ENCODE measurements at regions of chr15 and their contacts with region 1.

Region 1: DNA sequence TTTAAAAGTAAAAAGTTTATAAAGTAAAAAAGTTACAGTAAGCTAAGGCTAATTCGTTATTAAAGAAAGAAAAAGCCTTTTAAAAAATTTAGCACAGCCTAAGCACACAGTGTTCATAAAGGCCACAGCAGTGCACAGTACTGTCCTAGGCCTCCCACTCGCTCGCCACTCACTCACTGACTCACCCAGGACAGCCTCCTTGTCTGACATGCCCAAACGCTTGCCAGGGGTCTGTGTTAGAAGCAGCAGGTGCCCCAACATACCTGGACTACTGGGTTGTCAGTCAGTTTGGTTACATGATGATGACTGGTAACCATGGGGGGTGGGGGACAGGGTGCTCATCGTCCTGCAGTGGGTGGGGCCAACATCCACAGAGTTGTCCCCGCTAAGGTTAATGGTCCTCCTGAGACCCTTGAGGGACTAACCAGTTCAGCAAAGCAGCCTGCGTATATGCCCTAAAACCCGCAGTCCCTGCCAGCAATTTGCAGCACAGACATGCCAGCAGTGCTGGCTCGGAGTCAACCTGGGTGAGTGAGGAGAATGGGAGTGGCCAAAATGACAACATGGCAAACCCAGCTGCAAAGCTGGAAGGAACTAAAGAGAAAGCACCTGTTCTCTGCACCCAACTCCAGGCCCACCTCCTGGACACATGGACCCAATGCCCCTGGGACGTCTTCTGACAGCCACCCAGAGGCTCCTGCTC is 49.2 kb downstream of the CYFIP1 start:
- DNase-seq: no peak
- ATAC-seq: peak; percentile 79

Region 2: DNA sequence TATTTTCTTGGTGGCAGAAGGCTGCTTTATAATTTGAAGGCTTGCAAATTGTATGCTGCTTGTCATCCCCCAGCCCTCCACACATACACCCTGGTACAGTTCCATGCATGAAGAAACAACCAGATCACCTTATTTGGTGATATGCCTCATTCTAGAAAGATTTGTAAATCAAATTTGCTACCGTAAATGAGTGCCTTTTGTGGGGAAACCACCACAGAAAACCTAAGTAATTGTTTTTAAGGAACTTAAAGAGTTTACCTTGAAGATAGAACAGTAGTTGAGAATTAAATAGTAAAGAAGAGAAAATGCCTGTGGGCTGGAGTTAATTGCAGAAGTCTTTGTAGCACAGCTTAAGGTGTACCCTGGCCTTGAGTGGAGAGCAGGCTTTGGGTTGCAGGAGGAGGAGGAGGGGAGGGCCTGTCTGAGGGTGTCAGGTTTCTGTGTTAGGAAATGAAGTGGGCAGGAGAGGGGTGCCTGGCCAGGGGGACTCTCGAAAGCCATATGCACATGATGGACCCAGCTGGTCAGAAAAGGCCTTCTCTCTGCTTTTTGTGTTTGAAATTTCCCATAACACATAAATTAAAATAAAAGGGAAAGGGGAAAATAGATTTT is 85.5 kb before region 1 on chr15:
- intact Hi-C with region 1: no loop called
- DNase-seq: no peak
- ATAC-seq: no peak

Region 3: DNA sequence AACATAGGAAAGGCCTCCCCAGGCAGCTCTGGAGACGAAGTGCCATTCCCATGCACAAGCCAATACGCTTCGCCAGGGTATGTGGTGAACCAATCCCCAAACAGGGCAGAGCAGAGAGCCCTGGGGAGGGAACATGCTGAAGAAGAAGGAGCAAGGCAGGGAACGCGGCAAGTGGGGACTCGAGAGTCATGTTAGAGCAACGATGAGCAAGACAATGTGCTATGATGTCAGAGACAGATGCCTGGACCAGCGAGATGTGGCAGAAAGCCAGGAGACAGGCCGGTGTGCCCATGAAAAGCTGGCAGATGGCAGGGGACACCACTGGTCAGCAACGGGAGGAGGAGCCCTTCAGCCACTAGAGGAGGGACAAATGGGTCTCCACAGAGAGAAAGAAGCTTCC is 52.8 kb before region 1 on chr15:
- intact Hi-C with region 1: loop called (anchors 5 kb)
- DNase-seq: no peak
- ATAC-seq: no peak

Region 4: DNA sequence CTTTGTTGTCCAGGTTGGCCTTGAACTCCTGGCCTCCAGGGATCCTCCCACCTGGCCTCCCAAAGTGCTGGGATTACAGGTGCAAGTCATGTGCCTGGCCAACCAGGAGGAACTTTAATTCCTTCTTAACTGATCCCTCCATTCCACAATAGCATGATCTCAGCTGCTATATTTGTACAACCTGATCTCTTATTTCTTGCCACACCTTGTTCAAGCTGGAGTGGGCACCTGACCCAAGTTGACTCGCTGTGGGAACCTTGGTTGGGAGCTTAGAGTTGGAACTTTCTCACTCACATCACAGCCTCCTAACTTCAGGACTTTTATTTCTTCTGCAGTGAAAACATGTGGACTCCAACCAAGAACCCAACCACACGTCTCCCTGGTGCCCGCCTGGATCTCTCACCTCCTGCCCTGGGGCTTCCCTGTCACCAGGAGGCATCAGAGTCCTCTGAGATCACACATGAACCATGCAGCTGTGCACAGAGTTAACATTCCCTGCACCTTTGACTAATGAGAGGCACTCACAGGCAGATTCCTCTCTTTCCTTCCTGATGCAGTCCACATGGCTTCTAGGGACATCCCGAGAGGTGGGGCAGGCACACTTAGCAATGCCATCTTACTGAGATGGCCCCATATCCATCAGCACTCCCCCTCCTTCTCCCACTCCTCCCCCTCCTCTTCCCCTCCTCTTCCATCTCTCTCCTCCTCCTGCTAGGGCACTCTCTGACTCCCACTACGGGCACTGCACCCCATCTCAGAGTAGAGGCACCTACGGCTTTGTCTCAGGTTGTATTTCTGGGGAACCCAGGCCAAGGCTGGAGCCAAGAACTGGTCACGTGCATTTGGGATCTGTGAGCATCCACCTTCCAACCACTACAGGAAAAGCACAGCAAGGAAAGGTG is 58.9 kb after region 1 on chr15:
- intact Hi-C with region 1: no loop called
- DNase-seq: no peak
- ATAC-seq: peak; percentile 28

Region 5: DNA sequence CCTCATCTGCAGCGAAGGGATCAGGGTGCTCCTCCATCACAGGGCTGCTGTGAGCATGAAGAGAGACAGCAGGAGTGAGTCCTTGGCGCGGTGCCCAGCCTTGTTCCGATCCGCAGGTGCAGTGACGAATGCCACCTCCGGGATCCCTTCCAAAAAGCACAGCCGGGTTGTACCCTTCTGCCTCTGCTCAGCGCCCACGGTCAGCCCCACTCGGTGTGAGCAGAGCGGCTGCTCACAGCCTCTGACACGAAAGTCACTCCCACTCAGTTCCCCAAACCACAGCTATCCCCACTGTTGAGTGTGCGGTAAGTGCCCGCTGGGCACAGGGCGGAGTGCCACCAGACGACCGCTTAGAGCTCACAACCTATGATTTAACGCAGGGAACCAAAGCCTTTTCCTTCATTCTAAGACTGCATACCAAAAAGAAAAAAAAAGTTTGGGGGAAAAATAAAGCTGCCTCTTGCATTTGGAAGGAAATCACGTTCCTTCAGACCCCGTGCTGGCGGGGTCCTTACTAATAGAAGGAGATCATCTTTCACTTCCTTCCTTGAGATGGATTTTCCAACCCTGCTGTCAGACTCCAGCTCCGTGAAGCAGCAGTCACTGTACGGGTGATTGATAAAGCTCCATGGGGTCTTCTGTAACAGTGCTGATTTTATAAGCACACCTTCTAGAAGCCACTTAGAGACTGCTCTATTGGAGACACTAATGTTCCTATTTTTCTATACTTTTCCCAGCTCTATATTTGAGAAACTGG is 143.1 kb after region 1 on chr15:
- intact Hi-C with region 1: no loop called
- DNase-seq: no peak
- ATAC-seq: no peak

Measured in Right ventricle myocardium inferior (tissue), 1 donor.